A549 (cell line): ENCODE measurements at regions of chr20 and their contacts with region 1.

Region 1: DNA sequence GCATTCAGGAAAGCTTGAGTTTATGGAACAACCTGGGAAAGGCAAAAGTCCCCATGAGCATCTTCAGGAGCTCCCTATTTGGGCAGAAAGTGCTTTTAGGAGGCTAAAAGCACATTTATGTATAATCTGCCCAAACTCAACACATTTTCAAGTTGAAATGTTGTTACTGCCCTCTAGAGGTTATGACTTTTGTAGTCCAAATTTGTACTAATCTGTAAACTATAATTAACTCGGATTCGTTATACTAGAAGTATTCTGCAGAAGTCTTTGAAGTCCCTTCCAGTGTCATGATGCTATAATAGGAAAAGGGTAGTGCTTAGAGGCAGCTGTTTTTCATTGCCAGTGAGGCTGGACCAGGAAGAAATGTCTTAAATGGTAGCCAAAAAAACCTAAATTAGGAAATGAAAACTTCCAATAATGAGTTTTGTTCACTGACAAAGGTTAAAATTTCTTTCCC is 44.8 kb upstream of the EMILIN3 start:
- DNase-seq: peak in 1 of 2 experiments; percentile 17
- ATAC-seq: 0 out of 6 replicates have a peak, but pooled peaks of 1 of the 2 experiments have one; percentile 34
- H3K4me3 ChIP-seq: no peak overlapping the region
- H3K27ac ChIP-seq: no peak overlapping the region
- H3K4me1 ChIP-seq: no peaks in the 10 kb centered on the region
- CTCF ChIP-seq: peak; percentile 56
- EP300 ChIP-seq: no peak
- POLR2A ChIP-seq: no peak
- RAD21 ChIP-seq: peak; percentile 25 to 42; a peak in 4 of 5 replicates

Region 2: DNA sequence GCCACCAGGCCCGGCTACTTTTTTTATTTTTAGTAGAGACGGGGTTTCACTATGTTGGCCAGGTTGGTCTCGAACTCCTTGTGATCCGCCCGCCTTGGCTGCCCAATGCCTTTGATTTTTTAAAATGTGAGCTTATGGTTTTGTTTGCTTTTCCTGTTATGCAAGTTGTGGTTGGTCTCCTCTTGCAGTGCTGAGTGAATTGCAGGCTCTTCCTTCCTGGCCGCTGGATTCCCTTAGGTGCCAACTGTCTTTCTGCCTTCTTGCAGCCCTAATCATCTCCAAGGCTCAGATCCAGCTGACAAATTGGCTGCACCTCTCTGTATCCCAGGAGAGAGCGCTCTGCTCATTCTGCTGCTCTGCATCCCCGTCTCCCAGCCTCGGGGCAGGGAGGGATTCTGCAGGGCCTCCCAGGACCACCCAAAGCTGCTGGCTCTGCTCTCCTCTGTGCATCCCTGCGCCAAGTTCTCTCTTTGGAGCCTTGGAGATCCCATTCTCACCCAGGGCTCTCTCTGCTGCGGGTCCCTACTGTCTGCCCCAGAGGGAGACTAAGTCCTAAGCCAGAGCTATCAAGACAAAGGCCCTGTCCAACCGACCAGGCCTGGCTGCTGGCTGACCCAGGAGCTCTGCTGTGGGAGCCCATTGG is 30.7 kb before region 1 on chr20:
- CTCF ChIA-PET with region 1: no interaction called
- POLR2A ChIA-PET with region 1: no interaction called
- DNase-seq: no peak
- ATAC-seq: no peak; a peak in 1 of 6 replicates
- H3K4me3 ChIP-seq: no peak overlapping the region
- H3K27ac ChIP-seq: no peak overlapping the region
- H3K4me1 ChIP-seq: no peaks in the 10 kb centered on the region
- CTCF ChIP-seq: no peak
- EP300 ChIP-seq: no peak
- POLR2A ChIP-seq: no peak
- RAD21 ChIP-seq: no peak

Region 3: DNA sequence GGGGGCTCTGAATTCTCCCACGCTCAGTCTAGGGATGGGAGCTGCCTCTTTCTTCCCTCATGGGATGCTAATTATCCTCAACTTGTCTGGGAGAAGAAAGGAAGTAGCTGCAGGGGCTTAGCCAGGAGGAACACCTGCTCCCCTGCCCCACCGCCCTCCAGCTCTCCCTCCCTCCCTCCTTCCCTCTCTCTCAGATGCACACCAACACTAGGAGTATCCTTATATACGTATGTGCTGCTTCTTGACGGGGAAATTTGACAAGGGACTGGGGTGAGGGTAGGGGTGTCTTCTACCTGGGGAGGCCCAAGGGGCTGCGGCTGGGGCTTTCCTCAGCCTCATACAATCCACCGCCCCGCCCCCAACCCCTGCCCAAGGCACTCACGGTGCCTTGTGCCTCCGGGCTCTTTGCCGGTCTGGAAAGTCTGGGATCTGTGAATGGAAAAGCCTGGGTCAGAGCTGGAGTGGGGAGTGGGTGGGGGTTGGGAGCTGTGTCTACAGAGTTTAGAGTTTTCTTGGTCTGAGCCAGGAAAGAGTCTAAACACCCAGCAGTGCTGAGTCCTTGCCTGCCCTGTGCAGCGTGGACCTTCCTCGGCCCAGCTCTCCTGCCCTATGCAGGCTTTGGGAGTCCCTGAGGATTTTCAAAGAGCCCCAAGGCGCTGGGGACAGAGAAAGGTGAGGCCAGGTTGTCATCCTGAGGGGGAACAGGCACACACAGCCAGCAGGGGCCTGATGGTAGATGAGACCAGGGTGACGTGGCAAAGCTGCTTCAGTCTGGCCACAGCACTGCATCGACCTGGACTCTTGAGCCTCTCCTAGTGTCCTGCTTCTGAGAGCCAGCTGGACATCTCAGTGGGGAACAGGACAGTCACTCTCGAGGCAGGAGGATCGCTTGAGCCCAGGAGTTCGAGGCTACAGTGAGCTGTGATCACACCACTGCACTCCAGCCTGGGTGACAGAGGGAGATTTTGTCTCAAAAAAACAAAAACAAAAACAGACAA is 15.5 kb before region 1 on chr20:
- CTCF ChIA-PET with region 1: interaction called, 10 read pairs
- POLR2A ChIA-PET with region 1: no interaction called
- DNase-seq: no peak
- ATAC-seq: peak; percentile 4 to 39; a peak in 3 of 6 replicates
- H3K4me3 ChIP-seq: no peak overlapping the region
- H3K27ac ChIP-seq: no peak overlapping the region
- H3K4me1 ChIP-seq: no peaks in the 10 kb centered on the region
- CTCF ChIP-seq: no peak
- EP300 ChIP-seq: no peak
- POLR2A ChIP-seq: no peak
- RAD21 ChIP-seq: no peak

Region 4: GRCh38 chr20:41425180-41425884 is 13.9 kb after region 1 on chr20:
- CTCF ChIA-PET with region 1: interaction called, 11 read pairs
- POLR2A ChIA-PET with region 1: no interaction called
- DNase-seq: no peak
- ATAC-seq: no peak
- H3K4me3 ChIP-seq: no peak overlapping the region
- H3K27ac ChIP-seq: no peak overlapping the region
- H3K4me1 ChIP-seq: peaks cover 9% of the 10 kb centered on the region; the same call in 2 of the 3 replicates
- CTCF ChIP-seq: no peak
- EP300 ChIP-seq: no peak
- POLR2A ChIP-seq: no peak
- RAD21 ChIP-seq: no peak